Calu3 (cell line): ENCODE measurements at regions of chr7 and their contacts with region 1.

Region 1: GRCh38 chr7:136009488-136010079 is 32.4 kb upstream of the MTPN start:
- DNase-seq: peak; percentile 17
- H3K4me3 Mint-ChIP-seq: no peak overlapping the region
- H3K27ac Mint-ChIP-seq: no peak overlapping the region
- H3K4me1 Mint-ChIP-seq: no peaks in the 10 kb centered on the region
- H3K27me3 Mint-ChIP-seq: peaks cover 35% of the 10 kb centered on the region
- CTCF ChIP-seq: peak; percentile 58

Region 2: GRCh38 chr7:135672560-135673359 is 336.8 kb before region 1 on chr7:
- CTCF ChIA-PET with region 1: interaction called, 3 read pairs
- intact Hi-C with region 1: loop called (anchors 1 kb)
- DNase-seq: peak; percentile 29
- H3K4me3 Mint-ChIP-seq: no peak overlapping the region
- H3K27ac Mint-ChIP-seq: no peak overlapping the region
- H3K4me1 Mint-ChIP-seq: peaks cover 8% of the 10 kb centered on the region
- H3K27me3 Mint-ChIP-seq: no peaks in the 10 kb centered on the region
- CTCF ChIP-seq: peak; percentile 70

Region 3: DNA sequence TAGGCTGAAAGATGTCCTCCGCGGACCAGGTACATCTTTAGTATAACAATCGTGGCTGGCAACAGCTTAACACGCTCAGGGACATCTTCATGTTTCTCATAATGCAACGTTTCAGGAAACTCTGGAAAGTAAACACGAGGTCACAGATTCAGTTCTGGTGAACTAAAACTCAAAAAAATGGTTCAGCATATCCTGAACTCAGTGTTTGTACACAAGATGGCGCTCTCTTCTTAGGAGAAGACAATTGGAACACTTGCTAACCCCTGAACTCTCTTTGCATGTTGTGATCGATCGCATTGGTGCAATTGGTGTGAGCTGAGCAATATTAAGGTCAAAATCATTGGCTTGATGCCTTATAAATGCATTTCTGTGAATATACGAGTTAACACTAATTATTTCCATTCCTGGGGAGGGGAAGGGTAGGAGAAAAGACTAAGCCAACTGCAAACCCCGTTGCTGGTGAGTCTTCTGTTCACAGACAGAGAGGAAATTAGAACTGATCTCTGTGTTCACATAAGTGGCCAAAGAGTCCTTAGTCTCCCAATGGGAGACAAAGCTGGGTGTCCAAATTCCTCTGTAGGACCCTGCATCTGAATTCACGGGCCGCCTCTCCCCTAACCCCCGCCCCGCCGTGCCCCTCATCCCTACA is 208.4 kb before region 1 on chr7:
- CTCF ChIA-PET with region 1: no interaction called
- intact Hi-C with region 1: loop called (anchors 1 kb)
- DNase-seq: peak; percentile 42
- H3K4me3 Mint-ChIP-seq: no peak overlapping the region
- H3K27ac Mint-ChIP-seq: no peak overlapping the region
- H3K4me1 Mint-ChIP-seq: peaks cover 20% of the 10 kb centered on the region
- H3K27me3 Mint-ChIP-seq: peaks cover 45% of the 10 kb centered on the region
- CTCF ChIP-seq: peak; percentile 51